ENCODE measurements at regions of chr11 and their contacts with region 1.

Region 1: DNA sequence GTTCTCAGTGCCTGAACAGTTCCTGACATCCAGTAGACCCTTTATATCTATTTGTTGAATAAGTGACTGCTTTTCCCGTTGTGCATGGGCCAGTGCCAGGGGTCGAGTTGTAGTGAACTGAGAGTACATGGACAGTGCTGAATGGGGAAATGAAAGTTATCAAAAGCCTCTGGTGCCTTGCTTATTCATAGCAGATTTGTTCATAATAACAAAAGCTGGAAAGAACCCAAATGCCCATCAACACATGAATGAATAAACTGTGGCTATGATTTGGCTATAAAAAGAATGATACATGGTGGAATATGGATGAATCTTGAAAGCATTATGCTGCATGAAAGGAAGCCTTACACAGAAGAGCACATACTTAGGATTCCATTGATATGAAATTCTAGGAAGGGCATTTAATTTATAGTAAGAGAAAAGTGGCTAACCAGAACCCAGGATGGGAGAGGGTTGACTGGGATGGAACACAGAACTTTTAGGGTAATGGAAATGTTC is 42.6 kb downstream of the PACS1 start:
- DNase-seq: no peak
- H3K4me3 ChIP-seq: no peak overlapping the region
- H3K4me3 Mint-ChIP-seq: peak overlapping the region in 7 of 8 donors; percentile 14 to 84 (median 65)
- H3K27ac ChIP-seq: peak overlapping the region; percentile 49
- H3K27ac Mint-ChIP-seq: peak overlapping the region; percentile 77 to 96 (median 90)
- H3K4me1 ChIP-seq: peaks cover 99% of the 10 kb centered on the region
- H3K4me1 Mint-ChIP-seq: peaks cover 69 to 97% (median 79%) of the 10 kb centered on the region in 4 donors
- H3K27me3 ChIP-seq: no peaks in the 10 kb centered on the region
- H3K27me3 Mint-ChIP-seq: no peaks in the 10 kb centered on the region

Region 2: DNA sequence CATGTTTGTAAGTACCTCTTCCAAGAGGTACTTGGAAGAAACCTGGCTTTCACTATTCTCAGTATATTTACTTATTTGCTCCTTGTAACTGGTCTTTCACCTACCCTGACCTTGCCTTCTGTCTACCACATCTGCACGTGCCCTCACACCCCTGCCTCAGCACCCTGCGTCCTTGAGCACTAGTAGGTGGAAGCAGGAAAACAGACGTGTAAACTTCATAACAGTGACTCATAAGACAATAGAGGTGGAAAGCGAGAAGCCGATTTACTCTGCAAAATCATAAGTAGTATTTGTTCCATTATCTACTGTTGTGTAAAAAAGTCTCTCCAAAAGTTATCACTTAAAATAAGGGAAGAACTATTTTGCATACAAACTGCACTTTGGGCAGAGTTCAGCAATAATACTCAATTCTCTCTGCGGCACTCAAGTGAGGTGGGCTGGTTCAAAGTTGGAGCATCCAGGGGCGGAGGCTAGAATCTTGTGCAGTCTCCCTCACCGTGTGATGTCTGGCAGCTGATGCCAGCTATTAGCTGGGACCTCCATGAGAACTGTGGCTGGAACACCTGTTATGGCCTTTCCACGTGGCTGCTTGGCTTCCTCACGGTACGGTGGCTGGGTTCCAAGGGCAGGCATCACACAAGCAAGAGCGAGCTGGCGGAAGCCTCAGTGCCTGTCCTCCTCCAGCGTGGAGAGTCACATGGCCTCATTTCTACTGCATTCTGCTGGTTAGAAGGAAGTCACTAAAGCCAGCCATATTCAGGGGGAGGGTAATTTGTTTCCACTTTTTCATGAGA is 12.2 kb before region 1 on chr11:
- CTCF ChIA-PET with region 1: interaction called, 22 read pairs
- POLR2A ChIA-PET with region 1: interaction called, 90 read pairs
- intact Hi-C with region 1: loop called (anchors 1 kb)
- DNase-seq: peak; percentile 72 to 89 (median 80)
- H3K4me3 ChIP-seq: peak overlapping the region; percentile 32 to 46
- H3K4me3 Mint-ChIP-seq: peak overlapping the region; percentile 75 to 87 (median 80)
- H3K27ac ChIP-seq: peak overlapping the region; percentile 57
- H3K27ac Mint-ChIP-seq: peak overlapping the region; percentile 76 to 98 (median 96)
- H3K4me1 ChIP-seq: peaks cover 76% of the 10 kb centered on the region
- H3K4me1 Mint-ChIP-seq: peaks cover 51 to 79% (median 60%) of the 10 kb centered on the region in 4 donors
- H3K27me3 ChIP-seq: no peaks in the 10 kb centered on the region
- H3K27me3 Mint-ChIP-seq: no peaks in the 10 kb centered on the region

Region 3: GRCh38 chr11:66126808-66127555 is 14.3 kb after region 1 on chr11:
- CTCF ChIA-PET with region 1: interaction called, 8 read pairs
- POLR2A ChIA-PET with region 1: interaction called, 8 read pairs
- intact Hi-C with region 1: loop called (anchors 1 kb)
- DNase-seq: peak; percentile 57 to 80 (median 64)
- H3K4me3 ChIP-seq: peak overlapping the region; percentile 2 to 14
- H3K4me3 Mint-ChIP-seq: peak overlapping the region; percentile 53 to 90 (median 78)
- H3K27ac ChIP-seq: peak overlapping the region; percentile 49
- H3K27ac Mint-ChIP-seq: peak overlapping the region; percentile 92 to 98 (median 95)
- H3K4me1 ChIP-seq: peaks cover 74% of the 10 kb centered on the region
- H3K4me1 Mint-ChIP-seq: peaks cover 65 to 81% (median 72%) of the 10 kb centered on the region in 4 donors
- H3K27me3 ChIP-seq: no peaks in the 10 kb centered on the region
- H3K27me3 Mint-ChIP-seq: no peaks in the 10 kb centered on the region

Region 4: DNA sequence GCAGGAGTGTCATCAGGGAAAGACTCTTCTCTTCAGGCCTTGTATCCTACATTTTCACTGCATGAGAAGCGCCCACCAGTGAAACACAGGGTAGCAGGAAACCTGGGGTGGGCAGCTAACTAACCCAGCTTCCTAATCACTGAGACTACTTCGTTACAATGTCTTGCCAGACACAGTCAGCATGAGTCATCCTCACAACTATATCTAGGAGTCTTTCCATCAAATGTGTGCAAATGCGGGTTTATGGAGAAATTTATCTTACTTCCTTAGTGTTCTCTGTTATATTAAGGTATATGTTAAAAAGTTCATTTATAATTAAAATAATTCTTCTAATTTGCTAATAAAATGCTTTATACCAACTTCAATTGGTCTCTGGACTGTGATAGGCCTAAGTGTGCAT is 75.9 kb after region 1 on chr11:
- CTCF ChIA-PET with region 1: no interaction called
- POLR2A ChIA-PET with region 1: no interaction called
- intact Hi-C with region 1: no loop called
- DNase-seq: no peak
- H3K4me3 ChIP-seq: no peak overlapping the region
- H3K4me3 Mint-ChIP-seq: no peak overlapping the region
- H3K27ac ChIP-seq: no peak overlapping the region
- H3K27ac Mint-ChIP-seq: no peak overlapping the region
- H3K4me1 ChIP-seq: peaks cover 9% of the 10 kb centered on the region
- H3K4me1 Mint-ChIP-seq: peaks cover 36 to 52% (median 44%) of the 10 kb centered on the region in 4 donors
- H3K27me3 ChIP-seq: no peaks in the 10 kb centered on the region
- H3K27me3 Mint-ChIP-seq: no peaks in the 10 kb centered on the region

Region 5: GRCh38 chr11:66216911-66217310 is 104.3 kb after region 1 on chr11:
- CTCF ChIA-PET with region 1: no interaction called
- POLR2A ChIA-PET with region 1: no interaction called
- intact Hi-C with region 1: no loop called
- DNase-seq: no peak
- H3K4me3 ChIP-seq: no peak overlapping the region
- H3K4me3 Mint-ChIP-seq: no peak overlapping the region
- H3K27ac ChIP-seq: no peak overlapping the region
- H3K27ac Mint-ChIP-seq: peak overlapping the region in 2 of 7 donors; percentile 4 to 53
- H3K4me1 ChIP-seq: peaks cover 2% of the 10 kb centered on the region
- H3K4me1 Mint-ChIP-seq: peaks cover 2 to 9% (median 4%) of the 10 kb centered on the region in 4 donors
- H3K27me3 ChIP-seq: no peaks in the 10 kb centered on the region
- H3K27me3 Mint-ChIP-seq: no peaks in the 10 kb centered on the region

Region 6: DNA sequence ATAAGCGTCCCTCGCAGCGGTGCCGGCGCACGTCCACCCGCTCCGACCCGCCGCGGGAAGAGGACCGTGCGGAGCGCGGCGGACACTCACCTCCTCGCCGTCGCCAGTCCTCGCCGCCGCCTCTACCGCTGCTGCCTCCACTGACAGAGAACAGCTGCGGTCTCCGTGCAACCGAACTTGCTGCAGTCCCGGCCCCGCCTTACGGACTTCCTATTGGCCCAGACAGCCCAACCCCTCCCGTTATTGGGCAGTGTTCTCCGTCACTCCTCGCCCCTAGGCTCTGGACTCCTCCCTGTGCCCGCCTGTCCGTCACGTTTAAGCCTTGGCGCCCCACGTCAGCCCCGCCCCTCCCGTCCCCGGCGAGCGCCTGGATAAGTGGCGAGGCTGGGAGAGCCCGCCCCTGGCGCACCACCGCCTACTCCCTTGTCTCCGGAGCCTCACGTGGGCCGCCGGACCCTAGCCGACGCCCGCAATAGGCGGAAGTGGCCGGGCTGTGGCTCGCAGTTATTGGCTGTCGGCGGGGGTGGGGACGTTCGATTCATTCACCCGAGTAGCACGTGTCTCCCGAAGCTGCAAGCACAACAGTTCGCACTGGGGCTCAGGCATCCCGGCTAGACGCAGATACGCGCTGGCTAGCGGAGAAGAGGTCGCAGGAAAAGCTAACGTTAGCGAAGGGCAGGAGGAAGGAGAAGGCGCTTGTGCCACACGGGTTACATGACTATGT is 845.7 kb after region 1 on chr11 and contains the start of gene PC:
- CTCF ChIA-PET with region 1: no interaction called
- POLR2A ChIA-PET with region 1: no interaction called
- intact Hi-C with region 1: no loop called
- DNase-seq: peak; percentile 96 to 99 (median 98)
- H3K4me3 ChIP-seq: peak within 1 kb of the TSS; percentile 76 to 77
- H3K4me3 Mint-ChIP-seq: peak within 1 kb of the TSS; percentile 87 to 93 (median 92)
- H3K27ac ChIP-seq: peak within 1 kb of the TSS; percentile 19
- H3K27ac Mint-ChIP-seq: peak within 1 kb of the TSS; percentile 56 to 94 (median 88)
- H3K4me1 ChIP-seq: peaks cover 21% of the 10 kb centered on the region
- H3K4me1 Mint-ChIP-seq: peaks cover 15 to 38% (median 16%) of the 10 kb centered on the region in 4 donors
- H3K27me3 ChIP-seq: no peaks in the 10 kb centered on the region
- H3K27me3 Mint-ChIP-seq: peaks cover 0 to 1% of the 10 kb centered on the region in 2 donors
- total RNA-seq, gene PC: 7.6 to 7.7 TPM

Measured in CD4-positive, alpha-beta memory T cell (primary cell).